CD4-positive, alpha-beta memory T cell (primary cell): ENCODE measurements at regions of chr10 and their contacts with region 1.

Region 1: GRCh38 chr10:94545391-94546048 is at the start of gene HELLS:
- DNase-seq: peak; percentile 71 to 81 (median 79)
- H3K4me3 ChIP-seq: peak within 1 kb of the TSS; percentile 79 to 93
- H3K4me3 Mint-ChIP-seq: peak within 1 kb of the TSS; percentile 92 to 100 (median 97)
- H3K27ac ChIP-seq: peak within 1 kb of the TSS; percentile 75
- H3K27ac Mint-ChIP-seq: peak within 1 kb of the TSS; percentile 91 to 98 (median 93)
- H3K4me1 ChIP-seq: peaks cover 23% of the 10 kb centered on the region
- H3K4me1 Mint-ChIP-seq: peaks cover 14 to 29% (median 22%) of the 10 kb centered on the region in 4 donors
- H3K27me3 ChIP-seq: no peaks in the 10 kb centered on the region
- H3K27me3 Mint-ChIP-seq: no peaks in the 10 kb centered on the region
- total RNA-seq, gene HELLS: 14.4 to 16.3 TPM

Region 2: DNA sequence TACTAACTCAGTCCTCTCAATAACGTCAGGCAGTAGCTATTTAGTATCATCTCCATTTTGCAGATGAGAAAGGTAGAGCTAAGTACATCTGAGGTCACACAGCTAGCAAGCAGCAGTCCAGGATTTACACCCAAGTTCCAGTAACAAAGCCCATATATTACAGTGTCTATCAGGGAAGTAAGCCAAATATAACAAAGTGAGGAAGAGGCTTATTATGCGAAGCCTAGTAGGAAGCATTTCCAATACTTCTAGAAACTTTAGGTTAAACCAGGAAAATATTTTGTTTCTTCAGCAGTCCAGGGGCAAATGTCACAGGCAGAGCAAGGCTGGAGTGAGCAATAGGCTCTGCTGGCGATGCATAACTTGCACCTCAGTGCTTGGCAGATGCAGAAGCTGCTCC is 236.7 kb before region 1 on chr10:
- CTCF ChIA-PET with region 1: no interaction called
- POLR2A ChIA-PET with region 1: no interaction called
- intact Hi-C with region 1: no loop called
- DNase-seq: no peak
- H3K4me3 ChIP-seq: no peak overlapping the region
- H3K4me3 Mint-ChIP-seq: no peak overlapping the region
- H3K27ac ChIP-seq: no peak overlapping the region
- H3K27ac Mint-ChIP-seq: no peak overlapping the region
- H3K4me1 ChIP-seq: no peaks in the 10 kb centered on the region
- H3K4me1 Mint-ChIP-seq: no peaks in the 10 kb centered on the region
- H3K27me3 ChIP-seq: no peaks in the 10 kb centered on the region
- H3K27me3 Mint-ChIP-seq: peaks cover 20 to 39% of the 10 kb centered on the region in 2 donors

Region 3: GRCh38 chr10:94362360-94363250 is 182.9 kb before region 1 on chr10 and contains the start of gene NOC3L:
- CTCF ChIA-PET with region 1: interaction called, 3 read pairs
- POLR2A ChIA-PET with region 1: no interaction called
- intact Hi-C with region 1: loop called (anchors 2 kb)
- DNase-seq: peak; percentile 91 to 93 (median 92)
- H3K4me3 ChIP-seq: peak within 1 kb of the TSS; percentile 64 to 82
- H3K4me3 Mint-ChIP-seq: peak within 1 kb of the TSS; percentile 94 to 97 (median 96)
- H3K27ac ChIP-seq: peak within 1 kb of the TSS; percentile 86
- H3K27ac Mint-ChIP-seq: peak within 1 kb of the TSS; percentile 93 to 99 (median 97)
- H3K4me1 ChIP-seq: peaks cover 26% of the 10 kb centered on the region
- H3K4me1 Mint-ChIP-seq: peaks cover 25 to 43% (median 34%) of the 10 kb centered on the region in 4 donors
- H3K27me3 ChIP-seq: no peaks in the 10 kb centered on the region
- H3K27me3 Mint-ChIP-seq: peaks cover 5 to 9% of the 10 kb centered on the region in 2 donors
- total RNA-seq, gene NOC3L: 21.8 to 22.5 TPM

Region 4: GRCh38 chr10:94397549-94398370 is 147.8 kb before region 1 on chr10:
- CTCF ChIA-PET with region 1: no interaction called
- POLR2A ChIA-PET with region 1: no interaction called
- intact Hi-C with region 1: no loop called
- DNase-seq: no peak
- H3K4me3 ChIP-seq: no peak overlapping the region
- H3K4me3 Mint-ChIP-seq: no peak overlapping the region
- H3K27ac ChIP-seq: no peak overlapping the region
- H3K27ac Mint-ChIP-seq: no peak overlapping the region
- H3K4me1 ChIP-seq: no peaks in the 10 kb centered on the region
- H3K4me1 Mint-ChIP-seq: peaks cover 0 to 6% (median 2%) of the 10 kb centered on the region in 4 donors
- H3K27me3 ChIP-seq: no peaks in the 10 kb centered on the region
- H3K27me3 Mint-ChIP-seq: peaks cover 16 to 25% of the 10 kb centered on the region in 2 donors